ENCODE measurements at regions of chr1 and their contacts with region 1.

Region 1: GRCh38 chr1:6014130-6014999 is 22.1 kb upstream of the NPHP4 start:
- DNase-seq: peak; percentile 68 to 69
- ATAC-seq: peak; percentile 64 to 90 (median 82)
- H3K4me3 ChIP-seq: no peak overlapping the region
- H3K27ac ChIP-seq: peak overlapping the region; percentile 62 to 96 (median 84)
- H3K4me1 ChIP-seq: peaks cover 4 to 48% (median 19%) of the 10 kb centered on the region in 9 donors
- H3K27me3 ChIP-seq: no peaks in the 10 kb centered on the region
- CTCF ChIP-seq: no peak

Region 2: GRCh38 chr1:6001992-6002576 is 12.3 kb before region 1 on chr1:
- intact Hi-C with region 1: loop called in 2 of 10 experiments (anchors 1 kb)
- DNase-seq: peak in 1 of 2 donors; percentile 66
- ATAC-seq: peak; percentile 20 to 60 (median 56)
- H3K4me3 ChIP-seq: no peak overlapping the region
- H3K27ac ChIP-seq: peak overlapping the region in 9 of 10 donors; percentile 60 to 96 (median 84)
- H3K4me1 ChIP-seq: peaks cover 0 to 23% (median 11%) of the 10 kb centered on the region in 9 donors
- H3K27me3 ChIP-seq: no peaks in the 10 kb centered on the region
- CTCF ChIP-seq: no peak

Region 3: GRCh38 chr1:6475381-6476133 is 461.2 kb after region 1 on chr1:
- intact Hi-C with region 1: no loop called
- DNase-seq: peak in 1 of 2 donors; percentile 63
- ATAC-seq: peak; percentile 42 to 79 (median 74)
- H3K4me3 ChIP-seq: no peak overlapping the region
- H3K27ac ChIP-seq: no peak overlapping the region
- H3K4me1 ChIP-seq: peaks cover 0 to 3% (median 0%) of the 10 kb centered on the region in 9 donors
- H3K27me3 ChIP-seq: no peaks in the 10 kb centered on the region
- CTCF ChIP-seq: peak; percentile 72 to 97 (median 90)

Measured in heart right ventricle (tissue), 16 donors.